ENCODE measurements at regions of chr3 and their contacts with region 1.

Region 1: DNA sequence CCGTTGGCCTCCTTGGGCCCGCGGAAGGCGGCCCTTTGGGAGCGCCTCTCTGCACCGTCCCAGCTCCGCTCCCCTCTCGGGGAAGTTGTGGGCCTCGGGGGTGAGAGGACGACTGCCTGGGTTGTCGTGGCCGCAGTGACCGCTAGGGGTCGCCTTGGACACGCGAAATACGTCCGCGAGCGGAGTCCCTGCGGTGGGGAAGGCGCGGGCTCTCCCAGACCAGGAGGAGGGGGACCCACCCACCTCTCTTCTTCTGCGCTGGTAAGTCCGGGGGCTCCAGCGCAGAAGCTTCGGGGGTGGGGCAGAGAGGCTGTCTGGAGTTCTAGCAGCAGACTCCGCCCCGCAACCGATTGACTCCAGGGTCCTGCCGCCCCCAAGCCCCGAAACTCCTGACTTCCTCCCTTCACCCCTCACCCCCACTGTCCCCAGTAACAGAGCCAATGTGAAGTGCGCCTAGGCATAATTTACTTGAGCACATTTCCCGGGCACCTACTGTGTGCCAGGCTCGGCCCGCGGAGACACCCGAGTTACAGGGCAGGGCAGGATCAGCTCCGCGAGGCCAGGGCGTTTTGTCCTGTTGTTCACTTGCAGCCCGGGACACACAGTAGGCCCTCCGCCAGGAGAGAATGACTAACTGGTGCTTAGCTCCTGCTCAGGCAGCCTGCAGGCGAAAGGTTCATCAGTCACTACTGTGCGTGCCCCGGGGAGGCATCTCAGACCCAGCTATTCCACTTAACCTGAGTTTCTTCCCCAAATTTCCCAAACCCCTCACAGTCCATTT is 32.8 kb downstream of the DNASE1L3 start:
- DNase-seq: peak; percentile 57 to 99
- H3K4me3 ChIP-seq: peak overlapping the region; percentile 0 to 62 (median 47); a peak in 6 of 8 replicates
- H3K27ac ChIP-seq: no peak overlapping the region
- H3K4me1 ChIP-seq: peaks cover 4 to 24% (median 14%) of the 10 kb centered on the region in 4 experiments
- H3K27me3 ChIP-seq: peaks cover 0 to 6% (median 2%) of the 10 kb centered on the region in 4 experiments; a peak in 2 of 7 replicates
- CTCF ChIP-seq: peak; percentile 78 to 94 (median 91)
- EP300 ChIP-seq: no peak
- POLR2A ChIP-seq: no peak; a peak in 1 of 3 replicates
- RAD21 ChIP-seq: peak; percentile 69 to 78

Region 2: DNA sequence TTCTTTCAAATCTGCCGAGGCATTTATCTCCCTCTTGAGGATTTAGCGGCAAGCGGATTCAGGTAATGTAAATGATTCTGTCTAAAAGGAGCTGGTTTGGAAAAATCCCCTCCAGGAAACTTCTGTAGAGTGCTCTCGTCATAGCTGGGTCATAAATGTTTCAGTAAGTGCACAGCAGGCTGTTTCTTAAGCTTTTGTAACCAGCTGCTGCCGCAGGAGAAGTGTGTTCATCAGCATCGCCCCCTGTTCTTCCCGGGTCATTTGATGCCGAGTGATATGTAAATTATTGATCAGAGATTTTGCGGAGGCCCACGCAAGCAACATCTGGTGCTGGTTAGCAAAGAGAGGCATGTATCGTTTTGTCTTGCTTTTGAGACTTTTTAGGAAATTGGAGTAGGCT is 20.2 kb before region 1 on chr3:
- CTCF ChIA-PET with region 1: interaction called, 13 read pairs
- POLR2A ChIA-PET with region 1: no interaction called
- DNase-seq: no peak
- H3K4me3 ChIP-seq: no peak overlapping the region
- H3K27ac ChIP-seq: no peak overlapping the region
- H3K4me1 ChIP-seq: no peaks in the 10 kb centered on the region
- H3K27me3 ChIP-seq: no peaks in the 10 kb centered on the region
- CTCF ChIP-seq: no peak
- EP300 ChIP-seq: no peak
- POLR2A ChIP-seq: no peak
- RAD21 ChIP-seq: no peak

Region 3: DNA sequence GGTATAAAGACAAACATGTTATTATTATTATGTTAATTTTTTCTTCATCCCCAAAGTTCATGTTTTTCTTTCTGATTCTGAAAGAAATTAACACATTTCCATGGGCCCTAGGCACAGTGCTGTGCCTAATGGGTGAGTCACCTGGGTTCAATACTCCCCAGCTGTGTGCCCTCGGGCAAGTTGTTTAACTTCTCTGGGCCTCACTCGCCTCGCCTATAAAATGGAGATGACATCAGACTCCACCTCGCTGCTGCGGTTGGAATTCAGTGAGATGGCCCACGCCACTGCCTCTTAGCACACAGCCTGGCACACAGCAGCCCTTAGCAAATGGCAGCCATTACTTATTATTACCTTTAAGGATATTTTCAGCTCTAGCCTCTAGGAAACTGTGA is 10.2 kb after region 1 on chr3:
- CTCF ChIA-PET with region 1: interaction called, 25 read pairs
- POLR2A ChIA-PET with region 1: interaction called, 8 read pairs
- DNase-seq: no peak
- H3K4me3 ChIP-seq: no peak overlapping the region
- H3K27ac ChIP-seq: no peak overlapping the region
- H3K4me1 ChIP-seq: peaks cover 0 to 4% (median 1%) of the 10 kb centered on the region in 4 experiments; a peak in 2 of 7 replicates
- H3K27me3 ChIP-seq: no peaks in the 10 kb centered on the region
- CTCF ChIP-seq: no peak
- EP300 ChIP-seq: no peak
- POLR2A ChIP-seq: no peak
- RAD21 ChIP-seq: no peak

Region 4: DNA sequence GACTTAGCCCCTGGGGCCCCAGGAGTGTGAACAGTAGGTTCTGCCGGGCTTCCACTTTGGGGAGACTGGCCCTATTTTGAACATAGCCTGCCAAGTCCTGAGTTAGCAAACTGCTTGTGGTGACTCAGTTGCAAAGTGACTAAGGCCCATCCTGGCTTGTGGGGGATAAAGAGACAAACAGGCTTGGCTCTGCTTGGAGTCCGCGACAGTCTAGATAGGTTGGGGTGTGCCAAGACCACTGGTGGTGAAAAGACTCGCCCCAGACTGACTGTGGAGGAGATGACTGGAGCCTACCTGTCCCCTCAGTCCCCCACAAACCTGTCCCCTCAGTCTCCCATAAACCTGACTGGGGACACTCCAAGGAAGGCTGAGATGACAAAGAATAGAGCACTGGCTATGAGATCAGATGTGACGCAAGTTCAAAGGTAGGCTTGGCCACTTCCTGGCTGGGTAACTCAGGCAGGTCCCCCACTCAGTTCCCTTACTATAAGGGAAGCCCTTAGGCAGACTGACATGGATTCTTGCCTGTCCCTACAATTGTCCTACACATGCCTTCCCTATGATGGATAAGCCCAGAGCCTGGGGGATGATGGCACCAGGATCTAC is 28.6 kb after region 1 on chr3:
- CTCF ChIA-PET with region 1: interaction called, 19 read pairs
- POLR2A ChIA-PET with region 1: no interaction called
- DNase-seq: no peak
- H3K4me3 ChIP-seq: no peak overlapping the region
- H3K27ac ChIP-seq: no peak overlapping the region
- H3K4me1 ChIP-seq: no peaks in the 10 kb centered on the region
- H3K27me3 ChIP-seq: peaks cover 0 to 3% (median 0%) of the 10 kb centered on the region in 4 experiments; a peak in 1 of 7 replicates
- CTCF ChIP-seq: no peak
- EP300 ChIP-seq: no peak
- POLR2A ChIP-seq: no peak
- RAD21 ChIP-seq: no peak

Region 5: DNA sequence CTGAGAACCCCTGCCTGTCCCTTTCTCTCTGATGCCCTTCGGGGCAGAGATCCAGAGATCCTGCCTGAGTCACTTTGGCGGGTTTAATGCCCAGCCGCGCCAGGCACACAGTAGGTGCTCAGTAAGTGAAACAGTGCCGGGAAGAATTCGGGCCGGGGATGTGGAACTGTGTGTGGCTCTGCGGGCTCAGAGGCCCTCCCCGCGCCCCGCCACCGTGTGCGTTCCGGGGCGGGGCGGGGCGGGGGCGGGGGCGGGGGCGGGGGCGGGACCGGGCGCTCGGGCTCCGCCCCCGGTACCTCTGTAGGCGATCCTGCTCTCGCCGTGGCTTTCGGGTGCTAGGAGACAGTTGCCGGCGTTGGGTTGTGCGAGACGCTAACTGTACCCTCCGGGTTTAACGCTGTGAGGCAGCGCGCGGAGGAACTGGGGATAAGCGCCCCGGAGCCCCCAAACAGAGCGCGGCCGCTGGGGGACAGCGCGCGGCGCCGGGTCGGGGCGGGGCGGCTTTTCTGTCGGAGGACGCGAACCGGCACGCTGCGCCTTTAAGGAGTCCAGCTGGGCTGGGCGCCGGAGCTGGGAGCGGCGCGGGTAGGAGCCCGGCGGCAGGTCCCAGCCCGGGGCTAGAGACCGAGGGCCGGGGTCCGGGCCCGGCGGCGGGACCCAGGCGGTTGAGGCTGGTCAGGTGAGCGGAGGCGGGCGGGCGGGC is 59.5 kb after region 1 on chr3 and contains the start of gene ABHD6:
- CTCF ChIA-PET with region 1: interaction called, 12 read pairs
- POLR2A ChIA-PET with region 1: no interaction called
- DNase-seq: peak in 1 of 2 experiments; percentile 94
- H3K4me3 ChIP-seq: peak within 1 kb of the TSS; percentile 75 to 90 (median 87)
- H3K27ac ChIP-seq: no peak within 1 kb of the TSS
- H3K4me1 ChIP-seq: peaks cover 0 to 6% (median 3%) of the 10 kb centered on the region in 4 experiments; a peak in 5 of 7 replicates
- H3K27me3 ChIP-seq: peaks cover 9 to 31% (median 30%) of the 10 kb centered on the region in 4 experiments
- CTCF ChIP-seq: peak; percentile 2 to 48 (median 26)
- EP300 ChIP-seq: no peak
- POLR2A ChIP-seq: no peak
- RAD21 ChIP-seq: peak; percentile 52 to 63; a peak in 3 of 4 replicates
- total RNA-seq, gene ABHD6: 5.9 and 6.3 TPM in 2 replicates

Region 6: GRCh38 chr3:58305882-58306711 is 128.2 kb after region 1 on chr3 and contains the starts of genes HTD2 and RPP14:
- CTCF ChIA-PET with region 1: interaction called, 177 read pairs
- POLR2A ChIA-PET with region 1: interaction called, 11 read pairs
- DNase-seq: peak; percentile 90 to 99
- H3K4me3 ChIP-seq: peak within 1 kb of the TSS; percentile 82 to 95 (median 93)
- H3K27ac ChIP-seq: peak within 1 kb of the TSS; percentile 97
- H3K4me1 ChIP-seq: no peaks in the 10 kb centered on the region
- H3K27me3 ChIP-seq: no peaks in the 10 kb centered on the region; a peak in 1 of 7 replicates
- CTCF ChIP-seq: peak; percentile 86 to 98 (median 92)
- EP300 ChIP-seq: peak in 1 of 2 experiments; percentile 63; a peak in 1 of 3 replicates
- POLR2A ChIP-seq: peak; percentile 75 to 96
- RAD21 ChIP-seq: peak; percentile 28 to 47; a peak in 3 of 4 replicates
- total RNA-seq, gene HTD2: 10.3 and 10.8 TPM in 2 replicates
- total RNA-seq, gene RPP14: 19.8 and 23.4 TPM in 2 replicates

Measured in H1 (cell line).